Colonic mucosa (tissue), 4 donors: ENCODE measurements at regions of chr1 and their contacts with region 1.

Region 1: DNA sequence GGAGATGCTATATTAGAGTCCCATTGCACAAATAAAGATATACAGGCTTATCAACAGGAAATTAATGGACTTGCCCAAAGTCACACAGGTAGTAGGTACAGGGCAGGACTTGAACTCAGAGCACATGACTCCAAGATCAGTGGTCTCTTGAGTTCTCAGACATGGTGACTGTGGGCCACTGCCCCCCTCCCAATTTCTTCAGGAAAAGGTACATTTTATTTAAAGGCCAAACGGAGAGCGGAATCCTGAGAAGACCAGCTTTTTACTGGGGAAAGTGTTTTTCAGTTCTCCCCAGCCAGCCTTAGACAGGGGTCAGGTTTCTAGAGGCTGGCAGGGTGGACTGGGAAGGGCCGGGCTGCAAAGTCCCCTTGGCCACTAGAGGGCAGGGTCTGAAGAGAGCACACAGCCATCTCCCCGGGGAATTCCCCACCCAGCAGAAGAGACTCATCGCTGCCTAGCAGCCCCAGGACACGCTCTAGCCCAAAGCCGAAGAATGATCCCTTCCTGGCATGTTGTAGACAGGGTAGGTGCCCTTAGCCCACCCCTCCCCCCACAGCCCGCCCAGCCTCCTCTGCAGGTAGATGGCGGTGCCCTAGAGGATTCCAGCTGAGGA is 29.7 kb downstream of the ACP6 start:
- DNase-seq: peak; percentile 72
- H3K4me3 ChIP-seq: no peak overlapping the region
- H3K27ac ChIP-seq: no peak overlapping the region
- H3K4me1 ChIP-seq: no peaks in the 10 kb centered on the region
- H3K27me3 ChIP-seq: no peaks in the 10 kb centered on the region
- CTCF ChIP-seq: peak; percentile 86

Region 2: DNA sequence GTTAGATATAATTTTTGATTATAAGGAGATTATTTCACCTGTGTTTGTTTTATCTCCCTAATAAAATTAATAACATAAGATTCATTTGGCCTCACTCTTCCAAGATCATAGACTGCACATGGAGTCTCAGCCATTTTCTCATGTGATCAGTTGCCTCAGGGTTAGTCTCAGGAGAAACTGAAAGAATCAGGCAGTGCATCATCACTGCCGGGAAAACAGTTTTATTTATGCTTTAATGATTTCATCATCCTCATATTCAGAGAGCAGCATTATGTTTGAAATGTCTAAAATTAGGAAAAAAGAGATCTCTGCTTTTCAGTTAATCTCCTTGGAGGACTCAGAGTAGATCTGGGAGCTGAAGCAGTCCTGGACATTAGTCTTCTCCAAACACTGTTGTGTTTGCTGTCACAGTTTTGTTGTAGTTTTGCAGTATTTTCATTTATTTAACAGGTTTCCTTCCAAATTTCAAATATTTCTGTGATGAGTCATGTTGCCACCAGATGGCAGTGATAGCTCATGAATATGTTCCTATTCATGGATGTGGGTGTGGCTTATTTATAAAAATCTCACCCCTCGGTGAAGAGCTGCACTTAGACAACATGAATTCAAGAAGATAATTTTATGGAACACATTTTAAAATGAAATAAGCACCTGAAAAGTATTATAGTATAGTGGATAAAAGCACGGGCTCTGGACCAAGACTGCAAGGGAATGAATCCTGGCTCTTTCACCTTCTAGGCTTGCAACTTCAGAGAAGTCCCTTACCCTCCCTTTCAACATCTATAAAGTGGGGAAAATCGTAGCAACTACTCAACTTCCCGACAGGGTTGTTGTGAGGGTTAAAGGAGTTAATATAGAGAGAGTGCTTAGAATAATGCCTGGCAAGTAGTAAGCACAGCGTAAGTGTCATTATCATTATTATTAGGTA is 367.0 kb before region 1 on chr1:
- intact Hi-C with region 1: loop called (anchors 5 kb)
- DNase-seq: peak; percentile 26
- H3K4me3 ChIP-seq: no peak overlapping the region
- H3K27ac ChIP-seq: no peak overlapping the region
- H3K4me1 ChIP-seq: no peaks in the 10 kb centered on the region
- H3K27me3 ChIP-seq: no peaks in the 10 kb centered on the region
- CTCF ChIP-seq: peak; percentile 44

Region 3: DNA sequence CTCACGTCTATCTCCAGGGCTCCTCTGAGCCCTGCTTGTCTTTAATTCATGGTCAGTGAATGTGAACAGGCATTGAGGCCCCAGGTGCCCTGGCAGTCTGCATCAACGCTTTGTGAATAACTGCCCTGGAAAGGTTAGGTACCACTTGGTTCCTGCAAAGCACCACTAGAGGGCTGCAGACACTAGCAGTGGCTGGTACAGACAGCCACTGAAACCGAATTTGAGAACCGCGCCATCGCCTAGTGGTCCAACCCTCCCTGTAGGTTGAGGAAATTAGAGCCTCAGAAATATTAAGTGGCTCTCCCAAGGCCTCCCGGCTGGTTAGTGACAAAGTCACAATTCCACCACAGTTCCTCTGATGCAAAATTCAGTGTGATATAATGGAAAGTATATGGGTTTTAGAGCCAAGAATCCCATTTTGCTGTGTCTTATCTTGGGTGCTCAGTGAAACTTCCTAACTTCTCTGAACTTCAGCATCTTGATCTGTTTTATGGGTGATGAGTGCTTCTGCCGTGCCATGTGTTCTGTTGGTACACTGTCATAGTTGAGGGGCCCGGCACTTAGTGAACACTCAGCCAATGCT is 145.6 kb before region 1 on chr1:
- intact Hi-C with region 1: loop called (anchors 5 kb)
- DNase-seq: peak; percentile 74
- H3K4me3 ChIP-seq: no peak overlapping the region
- H3K27ac ChIP-seq: no peak overlapping the region
- H3K4me1 ChIP-seq: no peaks in the 10 kb centered on the region
- H3K27me3 ChIP-seq: no peaks in the 10 kb centered on the region
- CTCF ChIP-seq: peak; percentile 91

Region 4: GRCh38 chr1:147509786-147510395 is 130.8 kb before region 1 on chr1:
- intact Hi-C with region 1: loop called (anchors 5 kb)
- DNase-seq: no peak
- H3K4me3 ChIP-seq: no peak overlapping the region
- H3K27ac ChIP-seq: no peak overlapping the region
- H3K4me1 ChIP-seq: no peaks in the 10 kb centered on the region
- H3K27me3 ChIP-seq: peaks cover 3% of the 10 kb centered on the region
- CTCF ChIP-seq: no peak

Region 5: DNA sequence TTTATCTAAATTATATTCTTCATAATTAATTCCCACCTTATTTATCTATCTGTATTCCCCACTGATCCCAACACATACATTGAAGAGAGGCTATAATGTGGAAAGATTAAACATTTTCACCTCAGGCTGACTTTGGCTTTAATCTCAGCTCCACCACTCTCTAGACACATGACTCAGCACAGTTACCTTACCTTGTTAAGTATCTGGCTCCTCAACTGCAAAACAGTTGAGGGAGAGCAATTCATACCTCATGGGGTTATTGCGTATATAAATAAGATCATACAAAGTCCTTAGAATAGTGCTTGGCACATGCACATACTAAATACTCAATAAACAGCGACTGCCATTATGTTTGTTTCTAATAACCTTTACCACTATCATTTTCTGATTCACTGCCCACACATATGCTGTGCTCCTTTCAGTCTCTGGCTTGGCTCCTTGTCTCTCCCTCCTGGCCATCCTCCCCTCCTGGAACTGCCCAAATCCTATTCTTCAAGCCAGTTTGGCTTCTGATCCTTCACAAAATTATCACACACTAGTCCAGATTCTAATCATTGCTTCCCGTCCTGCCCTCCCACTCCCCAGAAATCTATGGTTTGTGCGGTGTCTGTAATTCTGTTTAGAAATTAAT is 49.3 kb before region 1 on chr1:
- intact Hi-C with region 1: no loop called
- DNase-seq: no peak
- H3K4me3 ChIP-seq: no peak overlapping the region
- H3K27ac ChIP-seq: no peak overlapping the region
- H3K4me1 ChIP-seq: no peaks in the 10 kb centered on the region
- H3K27me3 ChIP-seq: no peaks in the 10 kb centered on the region
- CTCF ChIP-seq: no peak